MCF 10A (cell line): ENCODE measurements at regions of chr4 and their contacts with region 1.

Region 1: GRCh38 chr4:41934815-41935651 is at the start of gene TMEM33:
- DNase-seq: peak; percentile 96
- H3K4me3 Mint-ChIP-seq: peak within 1 kb of the TSS; percentile 81
- H3K27ac Mint-ChIP-seq: peak within 1 kb of the TSS; percentile 89
- H3K4me1 Mint-ChIP-seq: peaks cover 32% of the 10 kb centered on the region
- H3K27me3 Mint-ChIP-seq: no peaks in the 10 kb centered on the region
- CTCF ChIP-seq: no peak
- total RNA-seq, gene TMEM33: 101 and 117 TPM in 2 replicates

Region 2: GRCh38 chr4:41701961-41702360 is 233.1 kb before region 1 on chr4:
- CTCF ChIA-PET with region 1: no interaction called
- POLR2A ChIA-PET with region 1: interaction called, 50 read pairs
- intact Hi-C with region 1: no loop called
- DNase-seq: peak; percentile 62
- H3K4me3 Mint-ChIP-seq: no peak overlapping the region
- H3K27ac Mint-ChIP-seq: peak overlapping the region; percentile 97
- H3K4me1 Mint-ChIP-seq: peaks cover 26% of the 10 kb centered on the region
- H3K27me3 Mint-ChIP-seq: no peaks in the 10 kb centered on the region
- CTCF ChIP-seq: no peak

Region 3: DNA sequence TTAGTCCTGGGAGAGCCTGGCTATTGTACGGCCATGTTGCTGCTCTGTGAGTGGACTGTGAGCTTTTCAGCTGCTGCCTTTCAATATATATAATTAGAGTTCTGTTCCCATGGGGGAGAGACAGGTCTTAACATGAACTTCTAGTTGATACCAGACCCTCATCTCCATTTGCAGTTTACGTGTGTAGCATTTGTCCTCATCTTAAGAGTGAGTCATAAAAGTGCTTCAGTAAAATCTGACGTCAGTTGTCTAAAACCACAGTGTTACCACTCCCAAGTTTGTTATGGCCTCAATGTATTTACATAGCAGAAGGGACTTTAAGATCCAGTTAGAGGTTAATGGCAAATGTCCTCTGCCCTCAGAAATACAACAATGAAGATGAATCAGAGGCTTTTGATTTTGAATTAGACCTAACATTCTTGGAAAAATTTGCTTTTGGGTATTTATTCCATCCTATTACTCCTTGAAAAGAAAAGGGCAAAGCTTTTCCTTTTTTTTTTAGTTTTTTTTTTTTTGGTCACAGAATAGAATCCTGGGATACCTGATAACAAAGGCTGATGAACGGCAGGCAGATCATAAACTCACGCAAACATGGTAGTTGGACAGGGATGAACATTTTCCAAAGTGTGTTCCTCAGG is 225.1 kb before region 1 on chr4:
- CTCF ChIA-PET with region 1: no interaction called
- POLR2A ChIA-PET with region 1: interaction called, 50 read pairs
- intact Hi-C with region 1: no loop called
- DNase-seq: peak; percentile 96
- H3K4me3 Mint-ChIP-seq: no peak overlapping the region
- H3K27ac Mint-ChIP-seq: peak overlapping the region; percentile 89
- H3K4me1 Mint-ChIP-seq: peaks cover 34% of the 10 kb centered on the region
- H3K27me3 Mint-ChIP-seq: no peaks in the 10 kb centered on the region
- CTCF ChIP-seq: no peak

Region 4: GRCh38 chr4:41887821-41888686 is 47.0 kb before region 1 on chr4:
- CTCF ChIA-PET with region 1: interaction called, 6 read pairs
- POLR2A ChIA-PET with region 1: interaction called, 58 read pairs
- intact Hi-C with region 1: no loop called
- DNase-seq: peak; percentile 62
- H3K4me3 Mint-ChIP-seq: no peak overlapping the region
- H3K27ac Mint-ChIP-seq: peak overlapping the region; percentile 57
- H3K4me1 Mint-ChIP-seq: peaks cover 15% of the 10 kb centered on the region
- H3K27me3 Mint-ChIP-seq: no peaks in the 10 kb centered on the region
- CTCF ChIP-seq: peak; percentile 72

Region 5: GRCh38 chr4:41949531-41949930 is 14.5 kb after region 1 on chr4:
- CTCF ChIA-PET with region 1: no interaction called
- POLR2A ChIA-PET with region 1: interaction called, 69 read pairs
- intact Hi-C with region 1: no loop called
- DNase-seq: no peak
- H3K4me3 Mint-ChIP-seq: no peak overlapping the region
- H3K27ac Mint-ChIP-seq: peak overlapping the region; percentile 5
- H3K4me1 Mint-ChIP-seq: peaks cover 13% of the 10 kb centered on the region
- H3K27me3 Mint-ChIP-seq: no peaks in the 10 kb centered on the region
- CTCF ChIP-seq: no peak

Region 6: DNA sequence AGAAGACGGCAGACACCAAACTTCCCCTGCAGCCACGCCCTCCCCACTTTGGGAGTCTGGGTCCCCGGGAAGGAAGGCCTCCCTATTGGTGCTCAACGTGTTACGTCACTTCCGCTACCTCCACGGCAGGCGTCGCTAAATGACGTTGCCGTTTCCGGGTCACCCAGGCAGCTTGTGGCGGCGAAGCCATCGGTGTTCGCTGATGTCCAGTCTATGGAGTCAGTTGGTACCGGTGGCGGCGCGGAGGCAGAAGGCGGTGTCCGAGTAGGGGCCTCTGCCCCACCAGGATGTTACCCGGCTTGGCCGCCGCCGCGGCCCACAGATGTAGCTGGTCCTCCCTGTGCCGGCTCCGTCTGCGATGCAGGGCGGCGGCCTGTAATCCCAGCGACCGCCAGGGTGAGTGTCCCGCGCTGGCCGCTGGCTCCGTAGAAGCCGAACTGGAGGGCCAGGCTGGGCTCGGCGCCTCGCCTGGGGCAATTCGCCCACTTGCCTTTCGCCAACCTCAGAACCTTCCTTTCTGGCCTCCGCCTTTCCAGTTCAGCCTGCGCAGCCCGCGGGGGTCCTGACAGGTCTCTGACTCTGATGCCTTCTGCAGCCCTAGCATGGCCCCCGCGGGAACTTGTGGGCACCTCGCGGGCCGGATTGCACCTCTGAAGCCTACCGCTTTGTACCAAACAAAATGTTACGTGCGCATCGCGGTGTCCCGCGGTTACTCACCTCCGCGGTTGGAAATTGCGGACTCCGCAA is 55.5 kb after region 1 on chr4 and contains the start of gene SLC30A9:
- CTCF ChIA-PET with region 1: interaction called, 3 read pairs
- POLR2A ChIA-PET with region 1: interaction called, 98 read pairs
- intact Hi-C with region 1: loop called (anchors 5 kb)
- DNase-seq: peak; percentile 95
- H3K4me3 Mint-ChIP-seq: peak within 1 kb of the TSS; percentile 97
- H3K27ac Mint-ChIP-seq: peak within 1 kb of the TSS; percentile 93
- H3K4me1 Mint-ChIP-seq: peaks cover 6% of the 10 kb centered on the region
- H3K27me3 Mint-ChIP-seq: no peaks in the 10 kb centered on the region
- CTCF ChIP-seq: peak; percentile 14
- total RNA-seq, gene SLC30A9: 58.5 and 64.9 TPM in 2 replicates